ENCODE measurements at regions of chr16 and their contacts with region 1.

Region 1: GRCh38 chr16:11535471-11535870 is 51.2 kb downstream of the LITAF start:
- DNase-seq: peak; percentile 30
- H3K4me3 Mint-ChIP-seq: no peak overlapping the region
- H3K27ac Mint-ChIP-seq: peak overlapping the region; percentile 50
- H3K4me1 Mint-ChIP-seq: peaks cover 42% of the 10 kb centered on the region
- H3K27me3 Mint-ChIP-seq: no peaks in the 10 kb centered on the region
- CTCF ChIP-seq: no peak

Region 2: DNA sequence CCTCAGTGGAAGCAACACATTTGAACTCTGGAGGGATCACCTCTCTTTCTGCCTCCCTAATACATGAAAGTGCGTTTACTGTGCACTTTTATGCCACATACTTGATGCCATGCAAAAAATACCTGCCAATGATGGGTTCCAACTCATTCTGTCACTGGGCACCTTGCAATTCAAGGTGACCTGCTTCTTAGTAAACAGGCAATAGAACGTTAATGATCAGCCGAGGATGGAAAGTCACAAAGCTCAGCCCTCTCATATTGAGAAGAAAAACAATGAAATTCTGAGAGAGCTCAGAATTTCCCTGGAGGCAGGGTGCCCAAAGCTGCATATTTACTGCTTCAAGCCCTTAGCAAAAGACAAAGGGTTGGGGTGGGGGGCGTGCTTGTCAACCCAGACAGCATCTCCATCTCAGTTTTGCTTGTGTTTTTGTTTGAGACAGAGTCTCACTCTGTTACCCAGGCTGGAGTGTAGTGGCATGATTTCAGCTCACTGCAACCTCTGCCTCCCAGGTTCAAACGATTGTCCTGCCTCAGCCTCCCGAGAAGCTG is 28.1 kb after region 1 on chr16:
- CTCF ChIA-PET with region 1: interaction called, 13 read pairs
- intact Hi-C with region 1: no loop called
- DNase-seq: no peak
- H3K4me3 Mint-ChIP-seq: no peak overlapping the region
- H3K27ac Mint-ChIP-seq: no peak overlapping the region
- H3K4me1 Mint-ChIP-seq: peaks cover 54% of the 10 kb centered on the region
- H3K27me3 Mint-ChIP-seq: no peaks in the 10 kb centered on the region
- CTCF ChIP-seq: no peak

Region 3: DNA sequence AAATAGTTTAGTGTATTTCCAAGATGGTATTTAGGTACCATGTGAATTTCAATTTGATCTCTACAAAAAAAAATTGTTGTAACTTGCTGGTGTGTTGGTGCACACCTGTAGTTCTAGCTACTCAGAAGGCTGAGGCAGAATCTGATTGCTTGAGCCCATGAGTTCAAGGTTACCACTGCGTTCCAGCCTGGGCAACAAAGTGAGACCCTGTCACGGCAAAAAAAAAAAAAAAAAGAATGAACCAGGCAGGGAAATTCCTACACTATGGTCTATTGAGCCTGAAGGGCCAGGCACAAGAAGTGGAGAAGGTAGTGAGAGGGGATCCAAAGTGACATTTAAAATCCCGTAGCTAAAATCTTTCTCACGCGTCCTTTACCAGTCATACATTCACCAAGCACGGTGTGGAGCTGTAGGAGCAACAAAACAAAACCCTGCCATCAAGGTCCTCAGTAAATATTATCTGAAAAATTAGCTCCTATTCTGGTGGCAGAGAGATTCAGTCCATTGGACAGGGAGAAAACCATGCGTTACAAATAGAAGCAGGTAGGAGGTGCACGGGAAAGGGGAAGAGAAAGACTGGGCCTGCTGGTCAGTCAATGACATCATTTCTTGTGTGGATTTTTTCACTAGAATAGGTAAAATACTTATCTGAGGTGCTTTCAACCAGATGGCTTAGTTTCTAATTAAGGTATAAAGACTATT is 179.9 kb after region 1 on chr16:
- CTCF ChIA-PET with region 1: no interaction called
- intact Hi-C with region 1: loop called (anchors 5 kb)
- DNase-seq: no peak
- H3K4me3 Mint-ChIP-seq: no peak overlapping the region
- H3K27ac Mint-ChIP-seq: peak overlapping the region; percentile 28
- H3K4me1 Mint-ChIP-seq: peaks cover 38% of the 10 kb centered on the region
- H3K27me3 Mint-ChIP-seq: no peaks in the 10 kb centered on the region
- CTCF ChIP-seq: no peak

Region 4: GRCh38 chr16:11819798-11820197 is 284.3 kb after region 1 on chr16:
- CTCF ChIA-PET with region 1: no interaction called
- intact Hi-C with region 1: loop called (anchors 10 kb)
- DNase-seq: no peak
- H3K4me3 Mint-ChIP-seq: no peak overlapping the region
- H3K27ac Mint-ChIP-seq: peak overlapping the region; percentile 51
- H3K4me1 Mint-ChIP-seq: peaks cover 18% of the 10 kb centered on the region
- H3K27me3 Mint-ChIP-seq: no peaks in the 10 kb centered on the region
- CTCF ChIP-seq: no peak

Measured in Calu3 (cell line).